Astrocyte of the cerebellum (primary cell): ENCODE measurements at regions of chr16 and their contacts with region 1.

Region 1: DNA sequence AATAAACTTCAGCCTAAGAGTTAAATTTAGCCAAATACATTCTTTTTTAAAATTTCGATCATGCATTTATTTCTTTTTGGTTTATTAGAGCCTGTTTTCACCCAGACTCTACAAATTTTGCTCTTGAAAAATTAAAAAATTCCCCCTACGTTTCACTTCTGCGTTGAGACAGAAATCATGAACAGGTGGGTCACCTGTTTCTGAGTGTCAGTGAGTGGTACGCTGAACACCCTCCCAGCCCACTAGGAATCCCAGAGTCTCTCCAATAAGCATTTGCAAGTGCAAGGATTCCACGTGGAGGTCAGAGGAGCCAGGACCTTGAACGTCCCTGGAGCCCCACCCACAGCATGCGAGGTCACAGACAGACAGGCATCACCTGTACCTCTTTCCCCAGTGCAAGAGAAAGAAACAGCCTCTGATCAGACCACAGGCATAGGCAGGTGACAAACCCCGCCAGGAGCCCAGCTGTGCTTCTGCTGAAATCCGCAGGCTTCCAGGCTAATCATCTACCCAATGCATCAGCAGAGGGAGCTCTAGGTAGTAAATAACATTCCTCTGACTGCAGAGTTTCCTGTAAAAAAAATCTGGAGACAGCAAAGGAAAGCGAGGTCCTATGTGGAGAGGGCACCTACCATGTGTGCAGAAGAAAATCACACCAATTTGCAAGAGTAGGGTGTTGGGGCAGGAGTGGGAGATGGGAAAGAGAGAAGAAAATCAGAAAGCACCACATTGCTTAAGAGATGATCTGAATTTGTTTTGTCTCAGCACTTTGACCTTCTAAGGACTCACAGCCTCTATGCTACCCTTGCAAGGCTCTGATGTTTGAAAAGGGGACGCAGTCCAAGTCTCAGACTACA is 5.9 kb upstream of the XYLT1 start:
- DNase-seq: peak; percentile 63
- H3K4me3 ChIP-seq: no peak overlapping the region
- CTCF ChIP-seq: peak; percentile 75

Region 2: DNA sequence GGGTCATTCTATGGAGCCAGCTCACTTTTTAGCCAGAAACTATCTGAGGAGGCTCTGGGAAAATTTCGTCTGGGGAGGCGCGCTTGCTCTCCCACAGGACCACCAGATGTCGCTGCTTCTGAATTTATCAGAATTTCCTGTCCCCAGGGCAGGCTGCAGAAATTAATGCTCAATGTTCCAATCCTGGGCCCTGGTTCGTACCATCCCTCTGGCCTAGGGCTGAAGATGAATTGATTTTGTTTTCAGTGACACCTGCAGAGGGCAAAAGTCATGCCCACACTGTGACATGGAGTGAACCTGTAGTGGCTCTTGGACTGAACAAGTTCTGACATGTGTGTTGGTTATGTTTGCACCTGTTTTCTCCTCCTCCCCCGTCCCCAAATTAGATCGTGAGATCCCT is 615.1 kb before region 1 on chr16:
- in situ Hi-C with region 1: loop called (anchors 25 kb)
- DNase-seq: peak; percentile 19
- H3K4me3 ChIP-seq: no peak overlapping the region
- CTCF ChIP-seq: peak; percentile 71

Region 3: GRCh38 chr16:17759451-17760390 is 283.1 kb after region 1 on chr16:
- in situ Hi-C with region 1: no loop called
- DNase-seq: no peak
- H3K4me3 ChIP-seq: no peak overlapping the region
- CTCF ChIP-seq: no peak